ENCODE measurements at regions of chr6 and their contacts with region 1.

Region 1: DNA sequence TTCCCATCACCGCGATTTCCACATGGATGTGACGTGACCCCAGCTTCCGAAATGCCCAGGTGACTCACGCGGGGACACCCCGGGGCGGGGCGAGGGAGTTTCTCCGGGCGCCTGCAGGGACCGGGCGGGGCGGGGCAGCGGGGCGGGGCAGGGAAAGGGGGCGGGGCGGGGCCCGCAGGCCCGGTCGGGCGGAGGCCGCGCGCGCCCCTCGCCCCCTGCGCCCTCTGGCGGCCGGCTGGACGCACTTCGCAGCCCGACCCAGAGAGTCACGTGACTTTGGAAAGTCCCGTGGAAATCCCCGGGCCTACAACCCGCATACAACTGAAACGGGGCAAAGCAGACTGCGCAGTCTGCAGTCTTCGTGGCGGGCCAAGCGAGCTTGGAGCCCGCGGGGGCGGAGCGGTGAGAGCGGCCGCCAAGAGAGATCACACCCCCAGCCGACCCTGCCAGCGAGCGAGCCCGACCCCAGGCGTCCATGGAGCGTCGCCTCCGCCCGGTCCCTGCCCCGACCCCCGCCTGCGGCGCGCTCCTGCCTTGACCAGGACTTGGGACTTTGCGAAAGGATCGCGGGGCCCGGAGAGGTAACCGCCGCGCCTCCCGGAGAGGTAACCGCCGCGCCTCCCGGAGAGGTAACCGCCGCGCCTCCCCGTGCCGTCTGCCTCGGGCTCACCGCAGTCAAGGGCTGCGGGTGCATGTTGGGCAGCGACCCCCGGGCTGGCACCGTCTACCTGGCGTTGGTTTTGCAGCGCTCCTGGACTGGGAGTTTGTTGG is at the start of gene TNFAIP3:
- DNase-seq: peak; percentile 94 to 98 (median 96)
- ATAC-seq: peak; percentile 85
- H3K4me3 ChIP-seq: peak within 1 kb of the TSS; percentile 96
- H3K4me3 Mint-ChIP-seq: peak within 1 kb of the TSS; percentile 88 to 98 (median 94)
- H3K27ac ChIP-seq: peak within 1 kb of the TSS; percentile 99
- H3K27ac Mint-ChIP-seq: peak within 1 kb of the TSS; percentile 89 to 100 (median 99)
- H3K4me1 ChIP-seq: peaks cover 13 to 27% of the 10 kb centered on the region in 2 donors
- H3K4me1 Mint-ChIP-seq: peaks cover 37 to 72% (median 59%) of the 10 kb centered on the region in 7 donors
- H3K27me3 ChIP-seq: no peaks in the 10 kb centered on the region
- H3K27me3 Mint-ChIP-seq: no peaks in the 10 kb centered on the region
- total RNA-seq, gene TNFAIP3: 135 to 2,915 (median 141) TPM

Region 2: GRCh38 chr6:137493218-137494038 is 373.7 kb before region 1 on chr6:
- CTCF ChIA-PET with region 1: no interaction called
- POLR2A ChIA-PET with region 1: no interaction called
- intact Hi-C with region 1: no loop called
- DNase-seq: peak in 4 of 9 donors; percentile 17 to 43 (median 30)
- ATAC-seq: peak; percentile 19
- H3K4me3 ChIP-seq: peak overlapping the region; percentile 3
- H3K4me3 Mint-ChIP-seq: peak overlapping the region; percentile 47 to 81 (median 72)
- H3K27ac ChIP-seq: no peak overlapping the region
- H3K27ac Mint-ChIP-seq: peak overlapping the region in 2 of 9 donors; percentile 46 to 83
- H3K4me1 ChIP-seq: peaks cover 40 to 50% of the 10 kb centered on the region in 2 donors
- H3K4me1 Mint-ChIP-seq: peaks cover 27 to 85% (median 53%) of the 10 kb centered on the region in 7 donors
- H3K27me3 ChIP-seq: peaks cover 57 to 79% of the 10 kb centered on the region in 2 donors
- H3K27me3 Mint-ChIP-seq: peaks cover 83 to 97% (median 85%) of the 10 kb centered on the region in 5 donors

Region 3: DNA sequence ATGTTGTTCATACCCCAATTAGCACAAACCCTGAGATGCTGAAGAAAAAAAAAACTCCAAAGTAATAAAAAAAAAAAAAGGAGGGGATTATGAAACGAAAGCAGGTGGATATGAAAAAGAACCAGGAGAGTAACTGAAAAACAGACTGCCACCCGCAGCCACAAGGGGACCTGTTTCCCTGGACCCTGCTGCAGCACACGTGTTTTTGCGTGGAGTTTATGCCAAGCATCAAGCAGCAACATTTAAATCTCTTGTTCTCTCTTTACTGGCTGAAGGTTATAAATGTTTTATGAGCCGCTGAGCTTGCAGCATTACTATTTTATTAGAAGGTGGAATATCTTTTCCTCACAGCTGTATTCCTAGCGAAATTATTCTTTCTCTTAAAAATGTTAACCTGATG is 241.3 kb before region 1 on chr6:
- CTCF ChIA-PET with region 1: no interaction called
- POLR2A ChIA-PET with region 1: no interaction called
- intact Hi-C with region 1: no loop called
- DNase-seq: no peak
- ATAC-seq: no peak
- H3K4me3 ChIP-seq: no peak overlapping the region
- H3K4me3 Mint-ChIP-seq: no peak overlapping the region
- H3K27ac ChIP-seq: no peak overlapping the region
- H3K27ac Mint-ChIP-seq: no peak overlapping the region
- H3K4me1 ChIP-seq: no peaks in the 10 kb centered on the region
- H3K4me1 Mint-ChIP-seq: peaks cover 0 to under 1% (median 0%) of the 10 kb centered on the region in 7 donors
- H3K27me3 ChIP-seq: no peaks in the 10 kb centered on the region
- H3K27me3 Mint-ChIP-seq: peaks cover 6 to 35% (median 20%) of the 10 kb centered on the region in 5 donors

Region 4: DNA sequence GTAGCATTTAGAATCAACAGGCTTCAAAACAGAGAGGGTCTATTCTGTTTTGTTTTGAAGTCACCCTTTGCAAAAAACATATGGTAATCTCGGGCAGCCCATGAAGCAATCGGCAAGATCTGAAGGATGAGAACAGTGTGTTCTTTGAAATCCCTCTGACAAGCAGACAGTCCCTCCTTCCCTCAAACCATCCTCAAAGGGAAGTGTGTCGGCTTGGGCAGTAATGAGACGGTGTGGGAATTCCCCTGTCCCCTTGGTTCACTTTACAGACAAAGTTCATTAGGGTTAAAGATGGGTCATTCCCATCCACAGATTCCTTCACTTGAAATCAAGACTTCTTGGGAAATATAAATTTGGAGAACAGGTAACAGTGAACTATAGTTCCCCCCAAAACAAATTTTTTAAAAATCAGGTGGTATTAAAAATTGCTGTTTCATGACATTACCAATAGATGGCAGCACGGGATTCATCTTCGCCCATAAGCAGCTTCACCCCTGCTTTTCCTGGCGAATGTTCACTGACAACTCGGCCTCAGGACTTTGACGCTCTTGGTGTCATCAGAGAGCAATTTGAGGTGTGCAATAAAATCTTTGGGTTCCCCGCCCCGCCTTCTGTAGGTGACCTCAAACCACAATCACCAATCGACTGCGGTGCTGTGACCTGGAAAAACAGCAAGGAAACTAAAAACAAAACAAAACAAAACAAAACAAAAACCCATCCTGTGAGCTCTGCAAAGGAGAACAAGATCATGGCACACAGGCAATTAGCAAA is 159.3 kb before region 1 on chr6:
- CTCF ChIA-PET with region 1: interaction called, 19 read pairs
- POLR2A ChIA-PET with region 1: interaction called, 20 read pairs
- intact Hi-C with region 1: loop called (anchors 1 kb)
- DNase-seq: peak; percentile 44 to 94 (median 89)
- ATAC-seq: peak; percentile 86
- H3K4me3 ChIP-seq: peak overlapping the region; percentile 6
- H3K4me3 Mint-ChIP-seq: peak overlapping the region in 9 of 10 donors; percentile 38 to 82 (median 66)
- H3K27ac ChIP-seq: peak overlapping the region; percentile 79
- H3K27ac Mint-ChIP-seq: peak overlapping the region; percentile 88 to 99 (median 97)
- H3K4me1 ChIP-seq: peaks cover 26 to 37% of the 10 kb centered on the region in 2 donors
- H3K4me1 Mint-ChIP-seq: peaks cover 23 to 74% (median 40%) of the 10 kb centered on the region in 7 donors
- H3K27me3 ChIP-seq: no peaks in the 10 kb centered on the region
- H3K27me3 Mint-ChIP-seq: peaks cover 0 to 5% (median 0%) of the 10 kb centered on the region in 5 donors

Region 5: DNA sequence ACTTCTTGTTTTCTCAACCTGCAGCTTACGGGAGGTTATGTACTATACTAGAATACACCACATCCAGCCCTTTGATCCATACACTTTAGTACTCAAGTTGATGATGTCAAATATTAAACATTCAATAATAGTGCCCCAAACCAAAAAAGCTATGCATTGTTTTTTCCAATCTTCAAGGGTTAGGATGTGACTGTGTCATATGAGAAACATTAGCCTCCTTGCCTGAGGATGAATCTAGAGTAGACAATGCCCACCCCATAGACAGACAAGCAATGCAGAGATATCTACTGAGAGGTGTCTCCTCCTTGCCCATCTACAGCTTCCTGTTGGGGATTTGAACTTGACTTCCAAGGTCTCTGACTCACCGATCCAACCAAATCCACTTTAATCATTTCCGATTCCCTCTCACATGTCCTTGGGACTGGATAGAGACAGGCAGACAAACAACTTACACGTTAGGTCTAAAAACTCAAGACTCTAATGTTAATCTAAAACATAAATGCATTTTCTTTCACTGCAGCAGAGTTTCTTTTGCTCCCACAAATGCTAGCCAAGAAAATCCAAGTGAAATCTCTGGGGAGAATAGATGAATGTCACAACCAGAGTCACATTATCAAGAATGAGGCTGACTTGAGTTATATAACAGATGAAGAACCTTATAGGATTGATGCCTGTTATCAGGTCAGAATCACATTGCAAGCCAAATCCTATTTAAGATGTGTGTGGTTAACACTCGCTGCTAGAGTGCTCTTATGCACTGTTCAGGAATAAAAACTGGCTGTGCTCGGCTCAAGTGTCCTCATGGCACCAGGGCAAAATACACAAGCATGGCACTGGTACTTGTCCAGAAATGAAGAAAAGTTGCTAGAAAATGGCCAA is 75.6 kb before region 1 on chr6:
- CTCF ChIA-PET with region 1: interaction called, 74 read pairs
- POLR2A ChIA-PET with region 1: interaction called, 4 read pairs
- intact Hi-C with region 1: loop called in 1 of 2 experiments (anchors 2 kb)
- DNase-seq: peak in 1 of 9 donors; percentile 26
- ATAC-seq: no peak
- H3K4me3 ChIP-seq: no peak overlapping the region
- H3K4me3 Mint-ChIP-seq: peak overlapping the region in 1 of 10 donors; percentile 45
- H3K27ac ChIP-seq: no peak overlapping the region
- H3K27ac Mint-ChIP-seq: peak overlapping the region in 8 of 9 donors; percentile 1 to 79 (median 36)
- H3K4me1 ChIP-seq: peaks cover 7 to 28% of the 10 kb centered on the region in 2 donors
- H3K4me1 Mint-ChIP-seq: peaks cover 27 to 65% (median 50%) of the 10 kb centered on the region in 7 donors
- H3K27me3 ChIP-seq: no peaks in the 10 kb centered on the region
- H3K27me3 Mint-ChIP-seq: no peaks in the 10 kb centered on the region

Region 6: DNA sequence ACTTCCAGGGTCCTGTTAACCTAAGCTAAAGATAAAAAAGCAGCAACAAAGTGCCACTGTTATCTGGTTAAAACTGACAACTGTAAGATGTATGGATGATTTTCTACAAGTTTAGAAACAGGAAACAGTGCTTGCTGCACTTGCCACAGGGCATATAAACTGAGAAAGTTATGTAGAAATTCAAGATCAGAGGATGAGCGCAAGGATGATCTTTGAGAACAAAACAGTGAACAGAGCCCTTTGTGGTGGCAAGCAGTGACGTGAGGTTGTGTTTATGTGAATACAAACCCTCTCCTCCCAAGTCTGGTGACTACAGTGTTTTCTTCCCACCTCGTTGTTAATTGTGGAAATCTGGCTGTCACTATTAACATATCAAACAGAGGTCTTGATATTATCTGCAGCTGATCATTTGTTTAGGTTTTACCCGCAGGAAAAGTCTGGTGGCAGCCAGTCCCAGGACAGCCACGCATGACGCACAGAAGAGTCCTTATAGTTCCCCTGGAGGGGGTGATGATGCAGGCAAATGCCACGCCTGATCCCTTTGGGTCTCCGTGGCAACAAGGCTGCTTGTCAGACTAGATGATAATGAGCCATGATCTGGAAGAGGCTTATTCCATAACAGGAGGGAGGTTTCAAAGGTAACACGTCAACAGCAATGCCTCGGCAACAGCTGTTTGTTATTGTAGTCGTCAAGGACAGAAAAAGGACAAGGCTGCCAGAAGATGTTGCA is 43.1 kb before region 1 on chr6:
- CTCF ChIA-PET with region 1: interaction called, 15 read pairs
- POLR2A ChIA-PET with region 1: interaction called, 59 read pairs
- intact Hi-C with region 1: loop called (anchors 1 kb)
- DNase-seq: peak; percentile 59 to 100 (median 95)
- ATAC-seq: peak; percentile 87
- H3K4me3 ChIP-seq: peak overlapping the region; percentile 33
- H3K4me3 Mint-ChIP-seq: peak overlapping the region; percentile 72 to 86 (median 79)
- H3K27ac ChIP-seq: peak overlapping the region; percentile 99
- H3K27ac Mint-ChIP-seq: peak overlapping the region; percentile 96 to 100 (median 100)
- H3K4me1 ChIP-seq: peaks cover 43 to 76% of the 10 kb centered on the region in 2 donors
- H3K4me1 Mint-ChIP-seq: peaks cover 48 to 98% (median 93%) of the 10 kb centered on the region in 7 donors
- H3K27me3 ChIP-seq: no peaks in the 10 kb centered on the region
- H3K27me3 Mint-ChIP-seq: no peaks in the 10 kb centered on the region

Region 7: GRCh38 chr6:137903933-137904821 is 37.1 kb after region 1 on chr6:
- CTCF ChIA-PET with region 1: interaction called, 3 read pairs
- POLR2A ChIA-PET with region 1: interaction called, 4 read pairs
- intact Hi-C with region 1: loop called in 1 of 2 experiments (anchors 2 kb)
- DNase-seq: peak in 1 of 9 donors; percentile 49
- ATAC-seq: peak; percentile 72
- H3K4me3 ChIP-seq: no peak overlapping the region
- H3K4me3 Mint-ChIP-seq: peak overlapping the region in 7 of 10 donors; percentile 2 to 79 (median 64)
- H3K27ac ChIP-seq: no peak overlapping the region
- H3K27ac Mint-ChIP-seq: peak overlapping the region in 2 of 9 donors; percentile 10 to 91
- H3K4me1 ChIP-seq: peaks cover 4 to 6% of the 10 kb centered on the region in 2 donors
- H3K4me1 Mint-ChIP-seq: peaks cover 4 to 51% (median 22%) of the 10 kb centered on the region in 7 donors
- H3K27me3 ChIP-seq: no peaks in the 10 kb centered on the region
- H3K27me3 Mint-ChIP-seq: peaks cover 0 to 3% (median 0%) of the 10 kb centered on the region in 5 donors

Region 8: DNA sequence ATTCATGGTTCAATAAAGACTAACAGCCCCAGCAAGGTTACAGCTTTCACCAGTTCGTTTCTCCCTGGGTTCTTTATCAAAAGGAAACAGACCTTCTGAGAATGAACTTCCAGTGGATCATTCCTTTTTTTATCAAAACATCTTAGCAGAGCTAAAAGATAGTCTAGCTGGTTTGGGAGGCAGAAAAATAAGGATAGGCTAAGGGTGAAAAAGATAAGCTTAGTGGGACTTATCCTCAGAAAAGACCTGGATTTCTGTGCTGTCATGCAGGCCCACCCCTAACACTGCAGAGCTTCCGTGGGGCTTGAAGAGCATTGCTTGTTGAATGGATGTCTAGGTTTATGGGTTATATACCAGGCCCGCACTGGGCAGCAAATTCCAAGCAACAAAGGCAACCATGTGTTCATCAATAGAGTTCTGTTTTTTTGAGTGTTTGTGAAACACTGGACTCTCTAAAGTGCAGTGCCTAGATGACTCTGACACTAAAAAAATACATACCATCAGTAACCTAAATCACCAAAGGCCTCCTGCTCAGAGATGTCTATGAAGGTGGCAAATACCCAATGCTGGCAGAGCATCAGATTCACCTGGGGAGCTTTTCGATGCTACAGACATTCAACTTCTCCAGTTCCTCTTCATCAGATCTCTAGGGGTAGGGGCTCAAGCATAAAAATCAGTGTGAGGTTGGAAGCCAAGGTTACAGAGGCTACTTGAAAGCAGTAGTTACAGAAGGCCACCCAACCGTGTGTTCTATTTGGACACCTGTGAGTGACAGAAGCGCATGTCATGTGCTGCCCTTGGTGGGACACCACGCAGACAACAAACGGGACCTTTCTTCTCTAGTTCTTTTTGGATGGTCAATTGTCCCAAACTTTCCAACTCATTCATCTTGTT is 53.0 kb after region 1 on chr6:
- CTCF ChIA-PET with region 1: no interaction called
- POLR2A ChIA-PET with region 1: no interaction called
- intact Hi-C with region 1: no loop called
- DNase-seq: no peak
- ATAC-seq: no peak
- H3K4me3 ChIP-seq: no peak overlapping the region
- H3K4me3 Mint-ChIP-seq: no peak overlapping the region
- H3K27ac ChIP-seq: no peak overlapping the region
- H3K27ac Mint-ChIP-seq: no peak overlapping the region
- H3K4me1 ChIP-seq: no peaks in the 10 kb centered on the region
- H3K4me1 Mint-ChIP-seq: peaks cover 0 to 25% (median 1%) of the 10 kb centered on the region in 7 donors
- H3K27me3 ChIP-seq: no peaks in the 10 kb centered on the region
- H3K27me3 Mint-ChIP-seq: no peaks in the 10 kb centered on the region

Region 9: DNA sequence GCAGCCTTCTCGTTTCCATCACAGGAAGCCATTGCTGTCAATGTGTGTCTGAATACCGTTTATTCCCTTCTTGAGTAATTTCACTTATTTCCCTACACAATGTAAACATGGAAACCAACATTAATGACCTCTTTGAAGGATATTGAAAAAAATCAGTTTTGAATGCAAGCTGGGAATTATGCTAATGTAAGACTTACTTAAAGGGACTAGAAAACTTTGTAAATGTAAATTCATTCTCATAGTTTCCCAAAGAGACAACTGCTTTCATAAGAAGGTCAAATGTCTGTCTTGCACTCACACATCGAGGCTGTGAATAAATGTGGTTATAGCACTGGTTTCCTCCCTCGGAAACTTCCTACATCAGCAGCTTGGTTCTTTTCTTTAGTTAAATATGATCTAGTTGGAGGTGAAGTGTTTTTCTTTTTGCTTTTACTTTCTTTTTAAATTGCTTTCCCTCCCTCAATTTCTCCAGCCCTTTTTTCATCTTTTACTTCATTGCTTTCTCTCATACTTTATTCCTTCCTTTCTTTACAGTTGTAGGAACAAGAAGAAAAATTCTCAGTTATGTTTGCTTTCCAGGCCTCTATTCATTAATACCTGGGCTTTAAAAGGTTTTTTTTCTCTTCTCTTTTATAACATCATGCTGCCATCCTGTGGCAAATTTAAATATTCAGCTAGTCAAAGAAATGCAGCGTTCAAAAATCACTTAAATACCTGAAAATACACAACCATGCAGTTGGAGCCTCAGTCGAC is 108.3 kb after region 1 on chr6:
- CTCF ChIA-PET with region 1: interaction called, 11 read pairs
- POLR2A ChIA-PET with region 1: interaction called, 4 read pairs
- intact Hi-C with region 1: loop called (anchors 1 kb)
- DNase-seq: peak in 7 of 9 donors; percentile 22 to 65 (median 51)
- ATAC-seq: peak; percentile 85
- H3K4me3 ChIP-seq: peak overlapping the region; percentile 5
- H3K4me3 Mint-ChIP-seq: peak overlapping the region; percentile 9 to 92 (median 78)
- H3K27ac ChIP-seq: peak overlapping the region; percentile 66
- H3K27ac Mint-ChIP-seq: peak overlapping the region; percentile 91 to 99 (median 94)
- H3K4me1 ChIP-seq: peaks cover 17 to 41% of the 10 kb centered on the region in 2 donors
- H3K4me1 Mint-ChIP-seq: peaks cover 23 to 55% (median 31%) of the 10 kb centered on the region in 7 donors
- H3K27me3 ChIP-seq: no peaks in the 10 kb centered on the region
- H3K27me3 Mint-ChIP-seq: no peaks in the 10 kb centered on the region

Region 10: GRCh38 chr6:138773177-138774091 is 906.3 kb after region 1 on chr6 and contains the start of gene CCDC28A:
- CTCF ChIA-PET with region 1: no interaction called
- POLR2A ChIA-PET with region 1: interaction called, 3 read pairs
- intact Hi-C with region 1: loop called (anchors 1 to 5 kb)
- DNase-seq: peak; percentile 86 to 98 (median 97)
- ATAC-seq: peak; percentile 93
- H3K4me3 ChIP-seq: peak within 1 kb of the TSS; percentile 94
- H3K4me3 Mint-ChIP-seq: peak within 1 kb of the TSS; percentile 91 to 100 (median 99)
- H3K27ac ChIP-seq: peak within 1 kb of the TSS; percentile 87
- H3K27ac Mint-ChIP-seq: peak within 1 kb of the TSS; percentile 96 to 100 (median 100)
- H3K4me1 ChIP-seq: peaks cover 6 to 10% of the 10 kb centered on the region in 2 donors
- H3K4me1 Mint-ChIP-seq: peaks cover 4 to 39% (median 36%) of the 10 kb centered on the region in 7 donors
- H3K27me3 ChIP-seq: no peaks in the 10 kb centered on the region
- H3K27me3 Mint-ChIP-seq: no peaks in the 10 kb centered on the region
- total RNA-seq, gene CCDC28A: 19.9 to 34.2 (median 25.6) TPM